ENCODE measurements at regions of chr9 and their contacts with region 1.

Region 1: GRCh38 chr9:123338710-123339665 is 17.0 kb upstream of the CRB2 start:
- DNase-seq: peak; percentile 89
- H3K4me3 ChIP-seq: peak overlapping the region; percentile 59
- H3K27ac ChIP-seq: peak overlapping the region; percentile 93
- H3K4me1 ChIP-seq: peaks cover 97% of the 10 kb centered on the region
- CTCF ChIP-seq: no peak

Region 2: GRCh38 chr9:123174887-123175518 is 164.0 kb before region 1 on chr9:
- CTCF ChIA-PET with region 1: no interaction called
- POLR2A ChIA-PET with region 1: interaction called, 4 read pairs
- intact Hi-C with region 1: loop called (anchors 2 kb)
- DNase-seq: peak; percentile 93
- H3K4me3 ChIP-seq: peak overlapping the region; percentile 55
- H3K27ac ChIP-seq: peak overlapping the region; percentile 99
- H3K4me1 ChIP-seq: peaks cover 99% of the 10 kb centered on the region
- CTCF ChIP-seq: no peak

Region 3: GRCh38 chr9:123322273-123323195 is 16.5 kb before region 1 on chr9:
- CTCF ChIA-PET with region 1: interaction called, 3 read pairs
- POLR2A ChIA-PET with region 1: interaction called, 53 read pairs
- intact Hi-C with region 1: loop called (anchors 2 kb)
- DNase-seq: peak; percentile 87
- H3K4me3 ChIP-seq: peak overlapping the region; percentile 41
- H3K27ac ChIP-seq: peak overlapping the region; percentile 63
- H3K4me1 ChIP-seq: peaks cover 57% of the 10 kb centered on the region
- CTCF ChIP-seq: no peak

Region 4: GRCh38 chr9:123472862-123473614 is 134.1 kb after region 1 on chr9:
- CTCF ChIA-PET with region 1: no interaction called
- POLR2A ChIA-PET with region 1: no interaction called
- intact Hi-C with region 1: no loop called
- DNase-seq: no peak
- H3K4me3 ChIP-seq: no peak overlapping the region
- H3K27ac ChIP-seq: no peak overlapping the region
- H3K4me1 ChIP-seq: peaks cover 15% of the 10 kb centered on the region
- CTCF ChIP-seq: no peak

Measured in OCI-LY7 (cell line).